ENCODE measurements at regions of chr13 and their contacts with region 1.

Region 1: GRCh38 chr13:113816946-113817859 is 46.7 kb downstream of the GAS6 start:
- DNase-seq: peak; percentile 87 to 88
- ATAC-seq: peak; percentile 16 to 71 (median 44)
- H3K4me3 ChIP-seq: peak overlapping the region in 2 of 10 donors; percentile 26 to 31
- H3K27ac ChIP-seq: peak overlapping the region in 9 of 10 donors; percentile 28 to 82 (median 74)
- H3K4me1 ChIP-seq: peaks cover 49 to 81% (median 60%) of the 10 kb centered on the region in 9 donors
- H3K27me3 ChIP-seq: no peaks in the 10 kb centered on the region
- CTCF ChIP-seq: peak; percentile 74 to 89 (median 85)

Region 2: GRCh38 chr13:113607056-113607888 is 209.9 kb before region 1 on chr13:
- intact Hi-C with region 1: no loop called
- DNase-seq: no peak
- ATAC-seq: peak in 6 of 8 donors; percentile 9 to 39 (median 28)
- H3K4me3 ChIP-seq: no peak overlapping the region
- H3K27ac ChIP-seq: peak overlapping the region in 1 of 10 donors; percentile 83
- H3K4me1 ChIP-seq: peaks cover 0 to 21% (median 0%) of the 10 kb centered on the region in 9 donors
- H3K27me3 ChIP-seq: no peaks in the 10 kb centered on the region
- CTCF ChIP-seq: no peak

Region 3: GRCh38 chr13:113837554-113838355 is 20.6 kb after region 1 on chr13:
- intact Hi-C with region 1: loop called in 4 of 10 experiments (anchors 1 to 2 kb)
- DNase-seq: peak; percentile 93 to 94
- ATAC-seq: peak; percentile 93 to 97 (median 96)
- H3K4me3 ChIP-seq: peak overlapping the region in 5 of 10 donors; percentile 4 to 39 (median 25)
- H3K27ac ChIP-seq: peak overlapping the region; percentile 64 to 97 (median 88)
- H3K4me1 ChIP-seq: peaks cover 31 to 55% (median 51%) of the 10 kb centered on the region in 9 donors
- H3K27me3 ChIP-seq: no peaks in the 10 kb centered on the region
- CTCF ChIP-seq: no peak

Region 4: DNA sequence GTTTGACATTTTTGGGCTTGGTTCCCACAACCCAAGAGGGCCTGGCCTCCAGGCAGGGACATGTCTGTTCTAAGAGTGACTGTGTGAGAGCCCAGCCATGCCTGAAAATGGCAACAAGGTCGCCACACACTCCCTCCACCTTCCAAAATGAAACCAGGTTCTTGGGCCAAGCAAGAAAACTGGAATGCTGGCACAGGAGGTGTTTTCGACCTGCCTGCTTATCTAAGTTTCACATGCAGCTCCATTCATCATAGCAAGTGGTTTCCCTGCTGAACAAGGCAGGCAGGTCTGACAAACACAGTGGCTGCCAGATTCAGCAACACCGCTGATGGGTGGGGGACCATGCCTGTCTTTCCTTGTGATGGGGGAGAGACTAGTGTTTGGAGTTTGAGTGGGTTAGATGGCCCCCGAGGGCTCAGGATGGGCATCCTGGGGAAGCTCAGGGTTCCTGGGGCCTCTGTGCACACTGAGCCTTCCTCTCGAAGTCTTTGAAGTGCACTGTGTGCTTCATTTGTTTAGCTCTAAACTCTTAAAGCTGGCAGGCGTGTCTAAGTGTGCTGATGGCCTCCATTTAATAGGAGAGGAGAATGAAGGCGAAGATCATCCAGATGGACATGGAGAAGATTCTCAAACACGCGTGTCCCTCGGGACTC is 64.5 kb after region 1 on chr13:
- intact Hi-C with region 1: loop called in 1 of 10 experiments (anchors 1 kb)
- DNase-seq: peak in 1 of 2 donors; percentile 52
- ATAC-seq: peak; percentile 25 to 62 (median 46)
- H3K4me3 ChIP-seq: peak overlapping the region in 1 of 10 donors; percentile 5
- H3K27ac ChIP-seq: peak overlapping the region; percentile 69 to 94 (median 80)
- H3K4me1 ChIP-seq: peaks cover 12 to 62% (median 43%) of the 10 kb centered on the region in 9 donors
- H3K27me3 ChIP-seq: no peaks in the 10 kb centered on the region
- CTCF ChIP-seq: no peak

Region 5: DNA sequence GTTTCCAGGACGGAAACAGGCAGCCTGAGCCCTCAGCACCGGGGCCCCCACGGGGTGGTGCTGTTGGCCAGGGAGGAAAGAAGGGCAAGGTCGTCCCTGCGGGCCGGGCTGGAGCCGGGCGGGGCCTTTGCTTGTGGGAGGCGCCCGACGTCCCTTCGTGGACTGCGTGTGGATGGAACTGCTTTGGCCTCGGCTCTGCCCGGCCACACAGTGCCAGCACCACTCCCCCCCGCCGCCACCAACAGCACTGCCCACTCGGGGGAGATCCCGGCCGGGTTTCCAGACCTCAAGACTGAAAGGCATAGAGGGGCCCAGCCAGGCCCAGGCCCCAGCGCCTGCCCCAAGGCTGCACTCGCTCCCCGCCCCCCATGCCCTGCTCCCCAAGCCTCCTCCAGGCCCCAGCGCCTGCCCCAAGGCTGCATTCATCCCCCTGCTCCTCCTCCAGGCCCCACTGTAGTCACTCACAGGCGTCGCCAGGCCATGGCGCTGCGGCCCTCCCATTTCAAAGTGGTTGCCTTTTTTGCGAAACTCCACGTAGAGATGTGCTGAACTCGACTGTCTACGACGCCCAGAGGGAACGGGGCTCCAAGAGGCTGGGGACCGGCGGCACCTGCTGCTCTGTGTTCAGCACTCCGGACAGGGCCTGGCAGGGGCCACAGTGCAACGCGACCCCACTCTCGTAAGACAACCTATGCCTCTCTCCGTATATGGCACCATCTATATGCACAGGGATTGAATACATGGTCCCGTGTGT is 134.2 kb after region 1 on chr13:
- intact Hi-C with region 1: loop called in 9 of 10 experiments (anchors 1 to 5 kb)
- DNase-seq: peak; percentile 83 to 89
- ATAC-seq: peak; percentile 92 to 96 (median 94)
- H3K4me3 ChIP-seq: peak overlapping the region in 5 of 10 donors; percentile 17 to 32 (median 24)
- H3K27ac ChIP-seq: no peak overlapping the region
- H3K4me1 ChIP-seq: peaks cover 0 to 20% (median 11%) of the 10 kb centered on the region in 9 donors
- H3K27me3 ChIP-seq: no peaks in the 10 kb centered on the region
- CTCF ChIP-seq: peak; percentile 80 to 95 (median 88)